ENCODE measurements at regions of chr11 and their contacts with region 1.

Region 1: GRCh38 chr11:74702383-74703007 is 28.7 kb downstream of the CHRDL2 start:
- DNase-seq: peak; percentile 4 to 52 (median 41)
- ATAC-seq: peak; percentile 78
- H3K4me3 ChIP-seq: no peak overlapping the region
- H3K4me3 Mint-ChIP-seq: no peak overlapping the region
- H3K27ac ChIP-seq: no peak overlapping the region
- H3K27ac Mint-ChIP-seq: peak overlapping the region in 1 of 9 donors; percentile 22
- H3K4me1 ChIP-seq: no peaks in the 10 kb centered on the region
- H3K4me1 Mint-ChIP-seq: peaks cover 0 to 8% (median 0%) of the 10 kb centered on the region in 7 donors
- H3K27me3 ChIP-seq: no peaks in the 10 kb centered on the region
- H3K27me3 Mint-ChIP-seq: peaks cover 0 to 2% (median 2%) of the 10 kb centered on the region in 5 donors

Region 2: DNA sequence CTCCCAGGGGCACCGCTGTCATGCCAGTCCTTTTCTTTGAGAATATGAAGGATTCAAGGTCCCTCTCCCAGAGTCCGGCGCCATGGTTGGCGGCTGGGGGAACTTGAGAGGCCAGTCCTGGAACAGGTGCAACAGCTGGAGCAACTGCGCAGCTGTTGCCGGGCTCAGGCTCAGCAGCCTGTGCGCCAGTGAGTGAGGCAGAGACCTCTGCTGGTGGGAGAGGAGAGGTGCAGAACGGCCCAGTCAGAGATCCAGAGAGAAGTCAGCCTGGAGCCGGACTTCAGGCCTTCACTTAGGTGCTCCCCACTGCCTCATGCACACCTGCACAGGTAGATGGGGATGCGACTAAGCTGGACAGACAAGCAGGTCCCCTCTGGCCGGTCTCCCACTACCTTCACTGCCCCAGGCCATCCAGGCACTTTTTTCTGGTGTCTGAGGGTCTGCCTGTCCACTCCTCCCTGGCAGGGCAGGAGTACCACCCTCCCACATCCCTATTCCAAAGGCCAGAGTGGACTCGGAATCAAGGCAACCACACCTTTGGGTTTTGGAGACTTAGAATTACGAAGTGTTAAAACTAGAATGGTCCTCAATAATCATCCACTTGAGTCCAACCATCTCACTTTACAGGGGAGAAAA is 24.2 kb after region 1 on chr11:
- CTCF ChIA-PET with region 1: interaction called, 6 read pairs
- POLR2A ChIA-PET with region 1: no interaction called
- intact Hi-C with region 1: loop called in 1 of 2 experiments (anchors 1 kb)
- DNase-seq: peak in 8 of 9 donors; percentile 25 to 49 (median 38)
- ATAC-seq: peak; percentile 94
- H3K4me3 ChIP-seq: no peak overlapping the region
- H3K4me3 Mint-ChIP-seq: no peak overlapping the region
- H3K27ac ChIP-seq: no peak overlapping the region
- H3K27ac Mint-ChIP-seq: no peak overlapping the region
- H3K4me1 ChIP-seq: peaks cover 0 to 4% of the 10 kb centered on the region in 2 donors
- H3K4me1 Mint-ChIP-seq: peaks cover 0 to 11% (median 5%) of the 10 kb centered on the region in 7 donors
- H3K27me3 ChIP-seq: no peaks in the 10 kb centered on the region
- H3K27me3 Mint-ChIP-seq: peaks cover 25 to 66% (median 26%) of the 10 kb centered on the region in 5 donors

Region 3: DNA sequence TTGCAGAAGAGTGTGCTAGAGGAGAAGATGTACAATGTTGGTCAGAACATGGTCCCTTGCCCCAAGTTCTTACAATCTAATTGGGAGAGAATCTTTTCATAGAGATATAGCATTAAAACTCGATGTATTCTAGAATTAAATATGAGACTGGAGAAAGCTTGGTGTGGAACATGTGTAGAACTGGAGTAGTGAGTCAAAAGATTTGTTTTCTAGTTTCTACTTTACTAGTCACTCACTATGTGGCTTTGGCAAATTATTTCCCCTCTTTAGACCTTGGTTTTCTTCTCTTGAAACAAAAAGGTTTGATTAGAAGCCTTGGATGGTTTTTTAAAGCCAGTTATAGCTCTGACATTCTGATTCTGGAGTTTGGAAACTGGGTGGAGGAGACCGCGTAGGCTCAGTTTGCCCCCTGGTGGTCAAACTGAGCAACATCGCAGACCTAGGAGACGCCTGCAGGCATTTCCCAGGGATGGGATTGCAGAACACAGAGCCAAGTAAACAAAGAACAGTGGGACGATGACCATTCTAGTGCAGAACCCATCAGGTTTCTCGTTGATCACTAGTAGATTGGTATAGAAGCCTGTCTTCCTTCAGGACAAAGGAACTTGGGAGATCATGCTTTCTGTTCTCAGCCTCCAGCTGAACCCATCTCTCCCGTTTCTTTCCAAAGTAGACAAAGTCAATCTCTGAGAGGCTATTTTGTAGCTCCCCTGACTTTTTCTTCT is 37.2 kb after region 1 on chr11:
- CTCF ChIA-PET with region 1: interaction called, 11 read pairs
- POLR2A ChIA-PET with region 1: no interaction called
- intact Hi-C with region 1: loop called (anchors 1 kb)
- DNase-seq: peak in 5 of 9 donors; percentile 21 to 46 (median 41)
- ATAC-seq: peak; percentile 88
- H3K4me3 ChIP-seq: no peak overlapping the region
- H3K4me3 Mint-ChIP-seq: no peak overlapping the region
- H3K27ac ChIP-seq: no peak overlapping the region
- H3K27ac Mint-ChIP-seq: no peak overlapping the region
- H3K4me1 ChIP-seq: no peaks in the 10 kb centered on the region
- H3K4me1 Mint-ChIP-seq: peaks cover 0 to 13% (median 3%) of the 10 kb centered on the region in 7 donors
- H3K27me3 ChIP-seq: no peaks in the 10 kb centered on the region
- H3K27me3 Mint-ChIP-seq: peaks cover 6 to 39% (median 23%) of the 10 kb centered on the region in 5 donors

Measured in naive thymus-derived CD4-positive, alpha-beta T cell (primary cell).